ENCODE measurements at regions of chr5 and their contacts with region 1.

Region 1: GRCh38 chr5:133051580-133052332 is at the start of gene HSPA4:
- DNase-seq: peak; percentile 98
- H3K4me3 Mint-ChIP-seq: peak within 1 kb of the TSS; percentile 95
- H3K27ac Mint-ChIP-seq: peak within 1 kb of the TSS; percentile 99
- H3K4me1 Mint-ChIP-seq: peaks cover 52% of the 10 kb centered on the region
- H3K27me3 Mint-ChIP-seq: no peaks in the 10 kb centered on the region
- CTCF ChIP-seq: no peak
- total RNA-seq, gene HSPA4: 294 and 296 TPM in 2 replicates

Region 2: DNA sequence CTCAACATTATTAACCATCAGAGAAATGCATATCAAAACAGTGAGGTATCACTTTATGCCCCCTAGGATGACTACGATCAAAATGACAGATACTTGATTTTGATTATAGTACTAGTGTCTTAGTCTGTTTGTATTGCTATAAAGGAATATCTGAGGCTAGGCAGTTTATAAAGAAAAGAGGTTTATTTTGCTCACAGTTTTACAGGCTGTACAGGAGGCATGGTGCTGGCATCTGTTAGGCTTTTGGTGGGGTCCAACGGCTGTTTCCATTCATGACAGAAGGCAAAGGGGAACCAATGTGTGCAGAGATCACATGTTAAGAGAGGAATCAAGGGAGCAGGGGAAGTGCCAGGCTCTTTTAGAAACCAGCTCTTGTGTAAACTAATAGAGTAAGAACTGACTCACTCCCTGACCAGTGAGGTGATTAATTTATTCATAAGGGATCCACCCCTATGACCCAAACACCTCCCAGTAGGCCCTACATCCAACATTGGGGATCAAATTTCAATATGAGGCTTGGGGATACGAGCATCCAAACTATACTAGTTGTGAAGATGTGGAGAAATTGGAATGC is 72.3 kb before region 1 on chr5:
- CTCF ChIA-PET with region 1: no interaction called
- intact Hi-C with region 1: no loop called
- DNase-seq: no peak
- H3K4me3 Mint-ChIP-seq: no peak overlapping the region
- H3K27ac Mint-ChIP-seq: no peak overlapping the region
- H3K4me1 Mint-ChIP-seq: no peaks in the 10 kb centered on the region
- H3K27me3 Mint-ChIP-seq: no peaks in the 10 kb centered on the region
- CTCF ChIP-seq: no peak

Region 3: GRCh38 chr5:133015466-133015865 is 36.3 kb before region 1 on chr5:
- CTCF ChIA-PET with region 1: no interaction called
- intact Hi-C with region 1: loop called (anchors 5 kb)
- DNase-seq: no peak
- H3K4me3 Mint-ChIP-seq: no peak overlapping the region
- H3K27ac Mint-ChIP-seq: no peak overlapping the region
- H3K4me1 Mint-ChIP-seq: peaks cover 23% of the 10 kb centered on the region
- H3K27me3 Mint-ChIP-seq: no peaks in the 10 kb centered on the region
- CTCF ChIP-seq: no peak

Measured in Calu3 (cell line).